ENCODE measurements at regions of chr7 and their contacts with region 1.

Region 1: DNA sequence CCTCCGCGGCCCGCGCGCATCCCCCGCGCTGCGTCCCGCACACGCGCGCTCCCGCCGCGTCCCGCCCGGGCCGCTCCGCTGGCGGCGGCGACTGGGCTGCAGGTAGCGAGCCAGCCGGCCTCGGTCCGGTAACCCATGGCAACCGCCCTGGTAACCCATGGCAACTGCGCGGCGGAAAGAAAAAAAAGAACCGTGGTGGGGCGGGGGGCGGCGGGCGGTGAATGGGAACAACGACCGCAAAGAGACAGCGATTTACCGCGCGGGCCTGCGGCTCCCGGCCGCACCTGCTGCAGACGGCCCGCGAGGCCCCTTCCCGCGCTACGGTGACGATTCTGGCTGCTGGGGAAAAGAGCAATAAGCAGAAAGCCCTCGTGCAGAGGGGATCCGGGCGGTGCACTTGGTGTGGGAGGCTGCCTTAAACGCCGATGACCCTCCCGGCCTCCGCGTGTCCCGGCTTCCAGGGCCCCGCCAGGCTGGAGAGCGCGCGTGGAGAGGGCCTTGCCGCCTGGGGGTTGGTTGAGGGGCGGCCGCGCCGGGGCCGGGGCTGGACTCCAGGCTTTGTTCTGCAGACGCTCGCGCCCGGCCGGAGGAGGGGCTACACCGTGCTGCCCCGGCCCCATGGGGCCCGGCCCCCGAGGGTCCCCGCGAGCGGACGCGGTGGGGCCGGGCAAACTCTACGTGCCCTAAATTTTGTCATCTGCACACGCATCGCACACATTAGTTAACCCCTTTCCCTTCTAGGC is 84.7 kb downstream of the SNX10 start:
- DNase-seq: no peak
- H3K4me3 ChIP-seq: peak overlapping the region; percentile 38 to 40
- H3K27ac ChIP-seq: peak overlapping the region; percentile 56
- H3K4me1 ChIP-seq: peaks cover 21% of the 10 kb centered on the region
- H3K27me3 ChIP-seq: no peaks in the 10 kb centered on the region
- CTCF ChIP-seq: no peak
- POLR2A ChIP-seq: no peak

Region 2: GRCh38 chr7:26346611-26347203 is 29.6 kb before region 1 on chr7:
- intact Hi-C with region 1: no loop called
- DNase-seq: no peak
- H3K4me3 ChIP-seq: no peak overlapping the region
- H3K27ac ChIP-seq: no peak overlapping the region
- H3K4me1 ChIP-seq: no peaks in the 10 kb centered on the region
- H3K27me3 ChIP-seq: no peaks in the 10 kb centered on the region
- CTCF ChIP-seq: no peak
- POLR2A ChIP-seq: no peak

Region 3: GRCh38 chr7:26667500-26668133 is 291.3 kb after region 1 on chr7:
- intact Hi-C with region 1: loop called (anchors 2 kb)
- DNase-seq: no peak
- H3K4me3 ChIP-seq: no peak overlapping the region
- H3K27ac ChIP-seq: no peak overlapping the region
- H3K4me1 ChIP-seq: no peaks in the 10 kb centered on the region
- H3K27me3 ChIP-seq: no peaks in the 10 kb centered on the region
- CTCF ChIP-seq: peak; percentile 21 to 65 (median 61)
- POLR2A ChIP-seq: no peak

Region 4: DNA sequence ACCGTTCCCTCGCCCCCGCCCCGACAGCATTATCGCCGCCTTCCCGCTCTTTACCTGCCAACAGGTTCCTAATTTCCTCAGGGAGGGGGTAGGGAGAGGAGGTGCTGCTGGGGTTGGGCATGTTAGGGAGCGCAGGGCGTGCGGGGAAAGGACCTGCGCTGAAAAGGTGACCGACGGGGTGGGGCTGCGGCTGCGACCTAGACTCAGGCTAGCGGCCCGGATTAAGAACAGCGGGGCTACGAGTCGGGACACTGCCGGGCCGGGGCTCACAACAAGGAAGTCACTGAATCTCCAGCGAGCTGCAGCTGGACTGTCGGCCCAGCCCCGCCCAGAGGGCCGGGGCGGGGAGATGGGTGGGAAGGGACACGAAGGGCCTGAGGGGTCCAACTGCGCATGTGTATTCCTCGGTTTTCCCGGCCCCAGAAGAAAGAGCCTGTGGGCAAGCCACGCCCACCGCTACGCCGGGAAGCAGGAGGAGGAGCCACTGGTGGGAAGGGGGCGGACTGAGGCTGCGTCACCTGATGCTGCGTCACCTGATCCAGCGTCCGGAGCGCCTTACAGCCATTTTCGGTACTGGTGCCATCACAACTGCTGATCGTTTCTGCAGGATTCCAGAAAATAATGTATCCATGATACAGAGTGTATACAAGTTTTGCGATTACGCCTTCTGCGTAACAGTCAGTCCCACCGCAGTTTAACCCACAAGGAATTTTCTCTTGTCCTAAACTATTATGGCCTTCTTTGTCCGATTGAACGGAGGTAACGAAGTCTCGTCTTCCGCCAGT is 488.2 kb after region 1 on chr7 and contains the start of gene SKAP2:
- intact Hi-C with region 1: loop called (anchors 10 kb)
- DNase-seq: peak; percentile 99 to 100
- H3K4me3 ChIP-seq: peak within 1 kb of the TSS; percentile 60 to 64
- H3K27ac ChIP-seq: peak within 1 kb of the TSS; percentile 87
- H3K4me1 ChIP-seq: peaks cover 12% of the 10 kb centered on the region
- H3K27me3 ChIP-seq: no peaks in the 10 kb centered on the region
- CTCF ChIP-seq: peak in 1 of 3 experiments; percentile 7
- POLR2A ChIP-seq: peak in 1 of 2 donors; percentile 81
- total RNA-seq, gene SKAP2: 12.8 TPM

Region 5: DNA sequence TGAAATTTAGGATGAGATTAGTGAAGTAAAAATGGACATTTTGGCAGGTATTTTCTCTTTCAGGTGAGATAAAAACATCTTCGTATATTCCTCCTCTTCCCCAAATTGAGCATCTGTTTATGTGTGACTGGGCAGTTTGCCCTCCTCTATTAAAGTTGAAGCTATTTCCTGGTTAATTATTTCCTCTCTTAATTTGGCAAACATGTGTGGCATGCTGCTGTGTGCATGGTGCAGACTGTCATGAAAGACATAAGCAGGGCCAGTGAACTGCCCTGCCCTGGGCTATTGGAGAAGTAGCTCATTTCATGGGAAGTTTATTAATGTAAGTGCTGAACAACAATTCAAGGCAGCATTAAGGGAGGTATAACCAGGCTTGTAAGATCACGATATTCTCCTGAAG is 918.9 kb after region 1 on chr7:
- intact Hi-C with region 1: no loop called
- DNase-seq: no peak
- H3K4me3 ChIP-seq: no peak overlapping the region
- H3K27ac ChIP-seq: no peak overlapping the region
- H3K4me1 ChIP-seq: no peaks in the 10 kb centered on the region
- H3K27me3 ChIP-seq: no peaks in the 10 kb centered on the region
- CTCF ChIP-seq: no peak
- POLR2A ChIP-seq: no peak